Activated CD4-positive, alpha-beta T cell treated with anti-CD3 and anti-CD28 coated beads for 36 hours (primary cell): ENCODE measurements at regions of chr11 and their contacts with region 1.

Region 1: GRCh38 chr11:62726915-62727763 is at the start of gene HNRNPUL2:
- DNase-seq: peak; percentile 99
- ATAC-seq: peak; percentile 89
- H3K4me3 Mint-ChIP-seq: peak within 1 kb of the TSS; percentile 87
- H3K27ac Mint-ChIP-seq: peak within 1 kb of the TSS; percentile 97
- H3K4me1 Mint-ChIP-seq: peaks cover 41% of the 10 kb centered on the region
- H3K27me3 Mint-ChIP-seq: no peaks in the 10 kb centered on the region
- total RNA-seq, gene HNRNPUL2: 48.7 to 59.6 TPM

Region 2: GRCh38 chr11:62612366-62613290 is 114.5 kb before region 1 on chr11 and contains the starts of genes EML3 and ROM1:
- CTCF ChIA-PET with region 1: no interaction called
- POLR2A ChIA-PET with region 1: no interaction called
- intact Hi-C with region 1: loop called in 1 of 2 experiments (anchors 1 kb)
- DNase-seq: peak; percentile 91
- ATAC-seq: peak; percentile 78
- H3K4me3 Mint-ChIP-seq: peak within 1 kb of the TSS; percentile 91
- H3K27ac Mint-ChIP-seq: peak within 1 kb of the TSS; percentile 90
- H3K4me1 Mint-ChIP-seq: peaks cover 37% of the 10 kb centered on the region
- H3K27me3 Mint-ChIP-seq: no peaks in the 10 kb centered on the region
- total RNA-seq, gene EML3: 101 to 112 TPM
- total RNA-seq, gene ROM1: 1.5 to 1.9 TPM

Region 3: GRCh38 chr11:62671575-62672389 is 55.4 kb before region 1 on chr11 and contains the starts of genes LBHD1 and UQCC3:
- CTCF ChIA-PET with region 1: no interaction called
- POLR2A ChIA-PET with region 1: interaction called, 17 read pairs
- intact Hi-C with region 1: loop called (anchors 1 to 5 kb)
- DNase-seq: peak; percentile 86
- ATAC-seq: peak; percentile 88
- H3K4me3 Mint-ChIP-seq: peak within 1 kb of the TSS; percentile 91
- H3K27ac Mint-ChIP-seq: peak within 1 kb of the TSS; percentile 96
- H3K4me1 Mint-ChIP-seq: peaks cover 54% of the 10 kb centered on the region
- H3K27me3 Mint-ChIP-seq: no peaks in the 10 kb centered on the region
- total RNA-seq, gene LBHD1: 11.9 to 15.5 TPM
- total RNA-seq, gene UQCC3: 4.1 to 6.4 TPM

Region 4: DNA sequence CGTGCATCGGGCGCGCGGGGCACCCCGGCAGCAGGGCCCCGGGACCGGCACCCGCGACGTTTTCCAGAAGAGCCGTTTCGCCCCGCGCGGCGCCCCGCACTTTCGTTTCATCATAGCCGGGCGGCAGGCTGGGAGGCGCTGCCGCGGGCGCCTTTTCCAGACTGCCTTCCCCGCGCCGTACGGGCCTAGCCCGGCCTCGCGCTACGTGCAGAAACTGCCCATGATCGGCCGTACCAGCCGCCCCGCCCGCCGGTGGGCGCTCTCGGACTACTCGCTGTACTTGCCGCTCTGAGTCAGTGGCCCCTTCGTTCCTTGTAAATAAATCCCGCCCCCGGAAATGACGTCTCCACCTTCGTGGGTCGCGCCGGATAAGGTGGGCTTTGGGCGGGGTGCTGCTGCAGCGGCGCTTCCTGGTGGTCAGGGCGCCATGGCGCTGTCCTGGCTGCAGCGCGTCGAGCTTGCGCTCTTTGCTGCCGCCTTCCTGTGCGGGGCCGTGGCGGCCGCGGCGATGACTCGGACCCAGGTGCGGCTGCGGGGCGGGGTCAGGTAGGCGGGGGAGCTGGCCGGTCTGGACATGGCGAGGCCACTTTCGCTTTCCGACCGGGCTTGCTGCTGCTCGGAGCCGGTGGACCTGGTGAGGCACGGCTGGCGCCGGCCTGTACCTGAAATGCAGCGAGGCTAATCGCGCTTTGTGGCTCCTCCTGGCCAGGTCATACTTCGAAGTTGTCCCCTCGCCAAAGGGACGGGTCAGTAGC is 60.0 kb after region 1 on chr11 and contains the start of gene TMEM179B:
- CTCF ChIA-PET with region 1: interaction called, 5 read pairs
- POLR2A ChIA-PET with region 1: interaction called, 8 read pairs
- intact Hi-C with region 1: loop called (anchors 1 kb)
- DNase-seq: peak; percentile 99
- ATAC-seq: peak; percentile 63
- H3K4me3 Mint-ChIP-seq: peak within 1 kb of the TSS; percentile 90
- H3K27ac Mint-ChIP-seq: peak within 1 kb of the TSS; percentile 95
- H3K4me1 Mint-ChIP-seq: peaks cover 42% of the 10 kb centered on the region
- H3K27me3 Mint-ChIP-seq: no peaks in the 10 kb centered on the region
- total RNA-seq, gene TMEM179B: 19.5 to 35.9 TPM

Region 5: GRCh38 chr11:62855571-62856332 is 128.6 kb after region 1 on chr11:
- CTCF ChIA-PET with region 1: interaction called, 5 read pairs
- POLR2A ChIA-PET with region 1: interaction called, 53 read pairs
- intact Hi-C with region 1: loop called (anchors 1 kb)
- DNase-seq: peak; percentile 99
- ATAC-seq: peak; percentile 83
- H3K4me3 Mint-ChIP-seq: peak overlapping the region; percentile 99
- H3K27ac Mint-ChIP-seq: peak overlapping the region; percentile 97
- H3K4me1 Mint-ChIP-seq: peaks cover 53% of the 10 kb centered on the region
- H3K27me3 Mint-ChIP-seq: no peaks in the 10 kb centered on the region